Dendritic cell treated with granulocyte-macrophage colony-stimulating factor and Interleukin-4, amounts not matched to agents 40 ng/mL and 50 ng/mL, for 4 days (primary cell): ENCODE measurements at regions of chr6 and their contacts with region 1.

Region 1: DNA sequence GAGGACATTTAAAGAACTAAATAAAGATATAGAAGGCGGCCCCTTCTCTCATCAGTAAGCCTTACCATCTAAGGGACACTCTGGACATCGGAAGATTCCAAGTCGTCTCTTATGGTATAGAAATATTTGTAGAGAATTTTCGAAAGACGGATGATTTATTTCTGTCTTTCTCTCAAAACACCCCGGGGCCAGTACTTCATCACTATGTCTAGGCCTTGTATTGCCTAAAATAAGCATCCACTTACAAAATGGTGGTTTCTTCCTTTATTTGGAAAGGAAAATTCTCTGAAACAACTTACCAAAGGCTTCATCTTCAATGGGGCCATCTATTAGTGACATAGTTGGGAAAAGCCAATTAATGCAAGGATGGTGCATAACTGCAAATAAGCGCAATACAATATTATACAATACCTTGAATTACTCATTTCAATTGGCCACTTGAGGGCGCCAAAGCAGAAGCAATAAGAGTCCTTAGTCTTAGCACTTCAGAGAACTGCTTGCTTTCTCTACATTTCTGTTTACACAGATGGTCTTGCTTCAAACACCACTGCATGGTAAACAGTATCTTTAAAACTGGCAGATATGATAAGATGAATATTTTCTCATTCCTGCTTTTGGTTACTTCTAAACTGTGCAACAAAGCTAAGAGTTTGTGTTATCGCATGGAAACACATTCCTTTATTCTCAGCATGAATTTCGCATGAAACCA is 113.2 kb downstream of the VIP start:
- H3K4me3 Mint-ChIP-seq: no peak overlapping the region
- H3K27ac Mint-ChIP-seq: no peak overlapping the region
- H3K4me1 Mint-ChIP-seq: no peaks in the 10 kb centered on the region
- H3K27me3 Mint-ChIP-seq: peaks cover 1% of the 10 kb centered on the region

Region 2: GRCh38 chr6:152897799-152898399 is 34.1 kb after region 1 on chr6:
- intact Hi-C with region 1: loop called (anchors 2 kb)
- H3K4me3 Mint-ChIP-seq: no peak overlapping the region
- H3K27ac Mint-ChIP-seq: no peak overlapping the region
- H3K4me1 Mint-ChIP-seq: no peaks in the 10 kb centered on the region
- H3K27me3 Mint-ChIP-seq: no peaks in the 10 kb centered on the region

Region 3: GRCh38 chr6:152948150-152948768 is 84.5 kb after region 1 on chr6:
- intact Hi-C with region 1: loop called (anchors 2 kb)
- H3K4me3 Mint-ChIP-seq: peak overlapping the region; percentile 13
- H3K27ac Mint-ChIP-seq: no peak overlapping the region
- H3K4me1 Mint-ChIP-seq: peaks cover 8% of the 10 kb centered on the region
- H3K27me3 Mint-ChIP-seq: peaks cover 2% of the 10 kb centered on the region

Region 4: GRCh38 chr6:153023977-153024708 is 160.4 kb after region 1 on chr6:
- intact Hi-C with region 1: loop called (anchors 1 kb)
- H3K4me3 Mint-ChIP-seq: no peak overlapping the region
- H3K27ac Mint-ChIP-seq: no peak overlapping the region
- H3K4me1 Mint-ChIP-seq: no peaks in the 10 kb centered on the region
- H3K27me3 Mint-ChIP-seq: peaks cover 6% of the 10 kb centered on the region